ENCODE measurements at regions of chr19 and their contacts with region 1.

Region 1: DNA sequence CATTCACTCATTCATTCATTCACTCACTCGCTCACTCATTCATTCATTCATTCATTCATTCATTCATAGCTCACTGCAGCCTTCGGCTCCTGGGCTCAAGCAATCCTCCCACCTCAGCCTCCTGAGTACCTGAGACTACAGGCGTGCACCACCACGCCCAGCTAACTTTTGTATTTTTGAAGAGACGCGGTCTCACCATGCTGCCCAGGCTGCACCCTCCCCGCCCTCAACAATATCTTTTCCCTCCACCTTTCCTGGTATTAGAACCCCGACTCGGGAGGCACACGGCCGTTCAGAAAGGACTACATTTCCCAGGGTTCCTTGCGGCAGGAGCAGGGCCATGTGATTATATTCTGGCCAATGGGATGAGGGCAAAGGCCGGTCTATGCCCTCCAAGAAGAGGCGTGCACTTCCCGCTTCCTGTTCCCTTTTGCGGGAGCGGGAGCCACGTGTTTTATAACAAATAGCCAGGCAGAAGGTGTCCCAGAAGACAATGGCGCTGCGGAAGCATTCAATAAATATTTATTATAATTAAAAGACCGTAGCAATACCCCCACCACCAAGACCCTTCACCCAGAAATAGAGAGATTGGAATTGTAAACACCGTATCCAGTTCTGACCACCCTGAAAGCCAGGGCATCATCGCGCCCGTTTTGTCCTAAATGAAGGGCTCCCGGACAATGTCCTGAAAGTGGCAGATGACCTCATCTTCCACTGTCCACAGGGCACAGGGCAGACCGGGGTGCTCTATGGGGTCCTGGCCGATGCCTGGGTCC is 15.9 kb downstream of the TICAM1 start:
- DNase-seq: peak; percentile 86 to 98 (median 95)

Region 2: DNA sequence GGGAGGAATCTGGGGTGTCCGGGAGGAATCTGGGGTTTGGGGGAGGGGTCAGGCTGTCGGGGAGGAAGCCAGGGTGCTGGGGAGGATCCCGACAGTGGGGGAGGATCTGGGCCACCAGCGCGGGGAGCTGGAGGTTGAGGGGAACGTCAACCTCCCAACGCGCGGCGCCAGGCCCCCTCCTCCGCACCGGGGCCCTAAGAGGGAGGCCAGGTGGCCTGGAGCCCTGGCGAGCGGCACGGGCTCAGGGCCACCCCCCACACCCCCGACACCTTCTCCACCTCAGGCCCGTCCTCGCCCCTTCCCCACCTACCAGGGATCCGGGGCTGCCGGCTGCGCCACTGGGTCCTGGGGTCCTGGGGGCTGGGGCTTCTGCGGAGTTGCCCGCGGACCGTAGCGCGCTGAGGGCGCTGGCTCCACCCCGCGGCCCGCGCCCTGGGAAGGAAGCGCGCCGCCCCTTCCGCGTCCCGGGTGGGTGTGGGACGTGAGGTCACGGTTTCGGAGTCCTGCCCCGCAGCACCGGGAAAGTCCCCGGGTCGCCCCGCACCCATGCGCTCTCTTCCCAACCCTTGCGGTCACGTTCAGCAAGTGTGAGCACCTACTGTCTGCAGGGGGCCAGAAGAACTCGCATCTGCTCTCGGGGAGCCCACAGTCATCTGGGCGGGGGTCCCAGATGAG is 15.8 kb after region 1 on chr19 and contains the start of gene TICAM1:
- intact Hi-C with region 1: no loop called
- DNase-seq: peak in 39 of 42 donors; percentile 39 to 79 (median 61)

Region 3: GRCh38 chr19:4909897-4910593 is 94.4 kb after region 1 on chr19:
- intact Hi-C with region 1: loop called (anchors 5 kb)
- DNase-seq: peak; percentile 88 to 98 (median 95)

Region 4: DNA sequence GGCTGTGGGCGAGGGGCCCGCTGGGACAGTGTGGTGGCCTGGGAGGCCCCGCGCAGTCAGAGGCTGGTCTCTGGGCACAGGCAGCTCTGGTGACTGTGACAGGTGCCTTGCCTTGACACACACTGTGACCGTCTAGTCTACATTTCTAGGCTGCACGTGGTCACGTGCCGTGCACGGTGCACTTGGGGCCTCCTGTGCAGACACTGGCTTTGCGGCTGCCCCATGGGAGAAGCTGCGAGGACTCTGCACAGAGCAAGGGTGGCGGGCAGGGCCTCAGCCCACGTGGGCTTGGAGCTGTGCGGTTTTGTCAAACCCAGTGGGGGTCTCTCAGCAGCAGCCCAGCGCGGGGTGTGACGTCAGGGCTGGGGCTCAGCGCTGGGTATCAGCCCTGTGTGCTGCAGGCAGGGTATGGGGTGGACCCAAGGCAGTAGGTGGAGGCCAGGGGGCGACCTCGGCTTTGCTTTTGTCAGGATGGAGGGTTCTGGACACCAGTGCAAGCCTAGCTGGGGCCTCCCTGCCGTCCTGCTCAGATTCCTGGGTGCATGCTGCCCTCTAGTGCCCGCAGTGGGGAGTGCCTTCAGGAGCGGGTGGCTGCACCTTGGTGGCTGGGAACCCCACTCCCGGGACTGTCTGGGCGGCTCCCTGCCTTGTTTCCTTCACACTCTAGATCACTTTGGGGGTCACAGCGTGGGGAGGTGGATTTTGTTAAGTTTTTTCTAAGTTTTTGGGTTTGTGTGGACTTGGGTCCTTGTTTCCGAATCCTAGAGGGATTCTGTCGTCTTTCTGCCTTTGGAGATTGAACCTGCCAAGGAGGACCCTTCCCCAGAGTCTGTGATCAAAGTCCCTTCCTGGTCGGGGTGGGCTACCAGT is 215.9 kb after region 1 on chr19:
- intact Hi-C with region 1: loop called (anchors 5 kb)
- DNase-seq: peak; percentile 62 to 96 (median 89)